ENCODE measurements at regions of chr12 and their contacts with region 1.

Region 1: GRCh38 chr12:44307506-44308168 is 471.8 kb downstream of the TMEM117 start:
- DNase-seq: no peak
- ATAC-seq: peak in 1 of 4 donors; percentile 58
- H3K4me3 ChIP-seq: no peak overlapping the region
- H3K27ac ChIP-seq: no peak overlapping the region
- H3K4me1 ChIP-seq: peaks cover 0 to 5% (median 0%) of the 10 kb centered on the region in 12 donors
- H3K27me3 ChIP-seq: no peaks in the 10 kb centered on the region
- CTCF ChIP-seq: no peak
- POLR2A ChIP-seq: no peak

Region 2: DNA sequence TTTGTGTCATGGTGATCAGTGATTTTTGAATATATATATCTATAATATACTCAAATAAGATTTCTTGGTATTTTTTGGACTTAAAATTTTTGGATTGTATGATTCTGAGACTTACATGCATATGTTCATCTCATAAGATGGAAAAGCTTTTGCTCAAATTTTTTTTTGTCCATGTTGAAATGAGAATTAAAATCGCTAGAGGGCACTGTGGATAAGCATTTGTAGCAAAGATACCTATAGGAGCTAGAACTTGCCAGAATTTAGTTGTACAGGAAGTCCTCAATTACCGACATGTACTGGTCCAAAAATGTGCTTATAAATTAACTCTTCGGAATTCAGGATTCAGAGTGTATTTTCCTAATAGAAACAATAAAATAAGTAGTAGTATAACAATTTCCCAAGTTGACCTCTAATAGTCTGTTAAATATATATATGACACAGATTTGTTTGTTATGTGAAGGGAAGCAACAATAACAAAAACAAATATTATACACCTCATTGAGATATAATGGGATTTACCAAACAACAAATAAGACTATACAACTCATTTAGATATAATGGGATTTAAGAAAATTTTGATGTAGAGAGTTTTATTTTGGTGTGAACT is 292.2 kb before region 1 on chr12:
- intact Hi-C with region 1: loop called in 1 of 10 experiments (anchors 10 kb)
- DNase-seq: no peak
- ATAC-seq: peak in 2 of 4 donors; percentile 53 to 61
- H3K4me3 ChIP-seq: no peak overlapping the region
- H3K27ac ChIP-seq: no peak overlapping the region
- H3K4me1 ChIP-seq: peaks cover 0 to 9% (median 2%) of the 10 kb centered on the region in 12 donors
- H3K27me3 ChIP-seq: no peaks in the 10 kb centered on the region
- CTCF ChIP-seq: peak; percentile 50 to 75 (median 62)
- POLR2A ChIP-seq: no peak

Region 3: DNA sequence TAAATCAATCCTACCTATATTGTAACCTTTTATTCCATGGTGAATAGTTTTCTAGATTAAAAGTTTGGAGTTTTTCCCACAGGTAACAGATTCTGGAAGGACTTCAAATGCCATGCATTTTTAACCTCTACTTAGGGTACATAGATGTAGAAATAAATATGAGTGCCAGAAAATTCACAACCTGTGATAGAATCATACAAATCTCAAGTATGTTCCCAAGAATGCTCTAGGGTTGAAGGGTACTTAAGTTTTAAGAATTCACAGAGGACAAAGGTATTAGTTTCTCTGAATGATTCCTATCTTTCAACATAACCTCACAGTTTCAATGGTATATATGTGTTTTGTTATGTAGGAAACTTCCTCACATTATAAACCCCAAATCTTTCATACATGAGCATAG is 39.5 kb after region 1 on chr12:
- intact Hi-C with region 1: no loop called
- DNase-seq: no peak
- ATAC-seq: no peak
- H3K4me3 ChIP-seq: no peak overlapping the region
- H3K27ac ChIP-seq: no peak overlapping the region
- H3K4me1 ChIP-seq: no peaks in the 10 kb centered on the region
- H3K27me3 ChIP-seq: no peaks in the 10 kb centered on the region
- CTCF ChIP-seq: no peak
- POLR2A ChIP-seq: no peak

Measured in heart left ventricle (tissue), 16 donors.